ENCODE measurements at regions of chr2 and their contacts with region 1.

Region 1: GRCh38 chr2:8681786-8682692 is at the start of gene ID2:
- DNase-seq: peak; percentile 99 to 100
- H3K4me3 ChIP-seq: peak within 1 kb of the TSS; percentile 82 to 89
- H3K27ac ChIP-seq: peak within 1 kb of the TSS; percentile 99 to 100
- H3K4me1 ChIP-seq: peaks cover 0 to 10% of the 10 kb centered on the region in 2 donors
- H3K27me3 ChIP-seq: no peaks in the 10 kb centered on the region
- CTCF ChIP-seq: no peak
- total RNA-seq, gene ID2: 752 TPM

Region 2: GRCh38 chr2:7256377-7256776 is 1425.7 kb before region 1 on chr2:
- intact Hi-C with region 1: no loop called
- DNase-seq: no peak
- H3K4me3 ChIP-seq: no peak overlapping the region
- H3K27ac ChIP-seq: no peak overlapping the region
- H3K4me1 ChIP-seq: no peaks in the 10 kb centered on the region
- H3K27me3 ChIP-seq: no peaks in the 10 kb centered on the region
- CTCF ChIP-seq: no peak

Region 3: DNA sequence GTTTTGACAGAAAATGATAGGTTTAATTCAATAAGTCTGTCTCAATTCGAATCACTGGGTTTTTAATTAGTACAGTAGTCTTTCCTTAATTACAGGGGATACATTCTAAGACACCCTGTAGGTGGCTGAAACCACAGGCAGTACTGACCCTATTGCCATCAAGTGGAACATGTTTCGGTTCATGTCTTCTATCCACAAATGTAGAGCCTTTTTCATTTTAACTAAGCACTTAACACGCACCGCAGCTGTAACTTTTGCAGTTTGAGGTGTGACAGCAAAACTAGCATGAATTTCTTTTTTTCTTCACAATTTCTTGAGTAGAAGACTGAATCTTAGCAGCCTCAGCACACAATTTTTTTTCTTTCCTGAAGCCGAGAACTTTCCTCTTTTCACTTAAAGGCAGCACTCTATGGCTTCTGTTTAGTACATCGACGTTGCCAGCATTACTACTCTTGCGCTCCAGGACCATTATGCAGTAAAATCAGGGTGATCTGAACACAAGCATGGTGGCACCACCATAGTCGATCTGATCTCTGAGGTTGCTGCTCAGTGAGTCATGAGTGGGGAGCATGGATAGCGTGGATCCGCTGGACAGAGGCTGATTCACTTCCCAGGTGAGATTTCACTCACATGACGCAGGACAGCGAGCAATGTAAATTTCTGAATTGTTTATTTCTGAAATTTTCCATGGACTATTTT is 959.7 kb before region 1 on chr2:
- intact Hi-C with region 1: loop called (anchors 5 kb)
- DNase-seq: no peak
- H3K4me3 ChIP-seq: no peak overlapping the region
- H3K27ac ChIP-seq: no peak overlapping the region
- H3K4me1 ChIP-seq: no peaks in the 10 kb centered on the region
- H3K27me3 ChIP-seq: no peaks in the 10 kb centered on the region
- CTCF ChIP-seq: no peak

Region 4: DNA sequence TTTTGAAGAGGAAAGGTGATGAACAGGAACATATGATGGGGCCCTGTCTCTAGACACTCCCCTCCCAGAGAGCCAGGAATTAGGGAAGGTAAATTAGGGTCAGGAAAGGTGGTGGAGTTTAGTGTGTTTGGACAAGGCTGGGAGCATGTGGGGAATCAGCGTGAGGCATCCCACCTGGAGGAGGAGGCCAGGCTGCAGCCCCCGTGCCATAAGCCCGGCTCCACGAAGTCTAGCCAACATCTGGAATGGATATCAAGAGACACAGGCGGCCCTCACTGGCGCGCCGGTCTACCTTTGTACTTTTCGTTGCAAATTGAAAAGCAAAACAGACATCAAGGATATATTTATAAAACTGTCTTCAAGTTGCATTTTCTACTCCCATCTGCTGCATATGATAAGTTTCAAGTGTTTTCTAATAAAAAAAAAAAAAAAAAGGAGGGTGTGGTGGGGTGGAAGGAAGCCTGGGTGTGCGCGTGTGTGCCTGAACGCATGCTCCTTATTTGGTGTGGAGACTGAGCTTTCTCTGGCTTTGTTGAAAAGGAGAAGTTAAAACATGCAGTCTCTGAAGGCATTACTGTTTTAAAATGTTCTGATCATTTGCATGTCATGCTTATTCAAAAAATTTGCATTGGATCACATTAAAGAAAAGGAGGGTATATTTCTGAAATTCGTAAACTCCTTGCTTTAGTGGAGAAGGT is 546.9 kb before region 1 on chr2:
- intact Hi-C with region 1: loop called (anchors 5 kb)
- DNase-seq: no peak
- H3K4me3 ChIP-seq: no peak overlapping the region
- H3K27ac ChIP-seq: no peak overlapping the region
- H3K4me1 ChIP-seq: peaks cover 3 to 14% of the 10 kb centered on the region in 2 donors
- H3K27me3 ChIP-seq: no peaks in the 10 kb centered on the region
- CTCF ChIP-seq: no peak

Region 5: GRCh38 chr2:8247905-8248622 is 434.0 kb before region 1 on chr2:
- intact Hi-C with region 1: loop called (anchors 1 kb)
- DNase-seq: peak in 1 of 2 donors; percentile 78
- H3K4me3 ChIP-seq: peak overlapping the region in 1 of 2 donors; percentile 48
- H3K27ac ChIP-seq: peak overlapping the region; percentile 98 to 99
- H3K4me1 ChIP-seq: peaks cover 11 to 32% of the 10 kb centered on the region in 2 donors
- H3K27me3 ChIP-seq: no peaks in the 10 kb centered on the region
- CTCF ChIP-seq: no peak

Region 6: GRCh38 chr2:8821276-8822217 is 139.5 kb after region 1 on chr2:
- intact Hi-C with region 1: loop called (anchors 2 kb)
- DNase-seq: peak; percentile 48 to 86
- H3K4me3 ChIP-seq: peak overlapping the region; percentile 5 to 45
- H3K27ac ChIP-seq: peak overlapping the region; percentile 75 to 88
- H3K4me1 ChIP-seq: peaks cover 0 to 10% of the 10 kb centered on the region in 2 donors
- H3K27me3 ChIP-seq: no peaks in the 10 kb centered on the region
- CTCF ChIP-seq: no peak

Region 7: GRCh38 chr2:10043906-10044601 is 1362.0 kb after region 1 on chr2:
- intact Hi-C with region 1: loop called (anchors 5 kb)
- DNase-seq: peak; percentile 91 to 99
- H3K4me3 ChIP-seq: peak overlapping the region; percentile 65 to 81
- H3K27ac ChIP-seq: peak overlapping the region; percentile 97
- H3K4me1 ChIP-seq: peaks cover 6 to 41% of the 10 kb centered on the region in 2 donors
- H3K27me3 ChIP-seq: no peaks in the 10 kb centered on the region
- CTCF ChIP-seq: no peak